Mammary epithelial cell (primary cell): ENCODE measurements at regions of chr5 and their contacts with region 1.

Region 1: DNA sequence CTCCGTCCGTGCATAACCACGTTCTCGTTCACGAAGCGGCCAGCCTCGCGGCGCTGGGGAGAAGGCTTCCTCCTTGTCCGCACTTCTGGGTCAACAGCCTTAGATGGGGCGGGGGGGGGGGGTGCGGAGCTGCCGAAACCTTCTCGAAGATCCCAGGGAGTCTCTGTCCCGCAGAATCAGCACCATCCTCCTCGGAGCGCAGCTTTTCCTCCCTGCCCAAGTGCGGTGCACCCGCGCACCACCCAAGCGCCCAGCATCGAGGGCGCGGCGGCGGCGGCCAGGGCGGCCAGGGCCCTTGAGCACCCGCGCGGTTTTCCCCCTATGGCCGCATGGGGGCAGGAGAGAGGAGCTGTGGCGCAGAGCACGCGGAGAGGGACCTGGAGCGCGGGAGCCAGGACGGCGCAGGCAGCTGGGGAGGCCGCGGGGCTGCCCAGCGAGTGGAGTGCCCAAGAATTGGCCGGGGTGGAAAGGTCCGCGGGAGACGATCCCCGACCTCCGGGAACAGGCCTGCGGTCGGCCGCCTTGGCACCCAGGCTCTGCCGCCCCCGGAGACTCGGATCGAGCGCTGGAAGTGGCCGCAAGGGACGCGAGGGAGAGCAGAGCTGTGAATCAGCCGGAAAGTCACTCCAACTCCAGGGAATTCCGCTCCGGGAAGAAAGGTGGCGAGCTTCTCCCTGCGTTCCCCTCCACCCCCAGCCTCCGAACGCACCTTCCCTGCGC is 43.1 kb downstream of the TMEM174 start:
- DNase-seq: peak; percentile 82
- H3K4me3 ChIP-seq: peak overlapping the region; percentile 52 to 63 (median 59)
- H3K27ac ChIP-seq: peak overlapping the region; percentile 28
- H3K4me1 ChIP-seq: peaks cover 11% of the 10 kb centered on the region
- H3K27me3 ChIP-seq: no peaks in the 10 kb centered on the region
- CTCF ChIP-seq: peak; percentile 52 to 80

Region 2: GRCh38 chr5:72920690-72921502 is 295.2 kb before region 1 on chr5:
- CTCF ChIA-PET with region 1: interaction called, 5 read pairs
- dilution Hi-C with region 1: no loop called
- in situ Hi-C with region 1: no loop called
- intact Hi-C with region 1: loop called (anchors 2 kb)
- DNase-seq: peak; percentile 26
- H3K4me3 ChIP-seq: no peak overlapping the region
- H3K27ac ChIP-seq: no peak overlapping the region
- H3K4me1 ChIP-seq: no peaks in the 10 kb centered on the region
- H3K27me3 ChIP-seq: no peaks in the 10 kb centered on the region
- CTCF ChIP-seq: peak; percentile 29 to 48

Region 3: GRCh38 chr5:73088026-73088425 is 128.0 kb before region 1 on chr5:
- CTCF ChIA-PET with region 1: interaction called, 8 read pairs
- dilution Hi-C with region 1: no loop called
- in situ Hi-C with region 1: no loop called
- intact Hi-C with region 1: loop called (anchors 2 kb)
- DNase-seq: no peak
- H3K4me3 ChIP-seq: no peak overlapping the region
- H3K27ac ChIP-seq: no peak overlapping the region
- H3K4me1 ChIP-seq: no peaks in the 10 kb centered on the region
- H3K27me3 ChIP-seq: no peaks in the 10 kb centered on the region
- CTCF ChIP-seq: no peak

Region 4: GRCh38 chr5:73152411-73153388 is 63.4 kb before region 1 on chr5:
- CTCF ChIA-PET with region 1: no interaction called
- dilution Hi-C with region 1: no loop called
- in situ Hi-C with region 1: no loop called
- intact Hi-C with region 1: no loop called
- DNase-seq: no peak
- H3K4me3 ChIP-seq: no peak overlapping the region
- H3K27ac ChIP-seq: no peak overlapping the region
- H3K4me1 ChIP-seq: no peaks in the 10 kb centered on the region
- H3K27me3 ChIP-seq: no peaks in the 10 kb centered on the region
- CTCF ChIP-seq: peak in 1 of 2 donors; percentile 56

Region 5: GRCh38 chr5:73298772-73299630 is 83.0 kb after region 1 on chr5:
- CTCF ChIA-PET with region 1: interaction called, 3 read pairs
- dilution Hi-C with region 1: no loop called
- in situ Hi-C with region 1: no loop called
- intact Hi-C with region 1: loop called (anchors 1 kb)
- DNase-seq: peak; percentile 22
- H3K4me3 ChIP-seq: no peak overlapping the region
- H3K27ac ChIP-seq: no peak overlapping the region
- H3K4me1 ChIP-seq: peaks cover 14% of the 10 kb centered on the region
- H3K27me3 ChIP-seq: peaks cover 38% of the 10 kb centered on the region
- CTCF ChIP-seq: no peak

Region 6: GRCh38 chr5:73365301-73365853 is 149.3 kb after region 1 on chr5:
- CTCF ChIA-PET with region 1: interaction called, 5 read pairs
- dilution Hi-C with region 1: no loop called
- in situ Hi-C with region 1: no loop called
- intact Hi-C with region 1: loop called (anchors 1 kb)
- DNase-seq: peak; percentile 91
- H3K4me3 ChIP-seq: no peak overlapping the region
- H3K27ac ChIP-seq: peak overlapping the region; percentile 80
- H3K4me1 ChIP-seq: peaks cover 46% of the 10 kb centered on the region
- H3K27me3 ChIP-seq: no peaks in the 10 kb centered on the region
- CTCF ChIP-seq: no peak

Region 7: GRCh38 chr5:73464016-73464745 is 248.1 kb after region 1 on chr5:
- CTCF ChIA-PET with region 1: no interaction called
- dilution Hi-C with region 1: no loop called
- in situ Hi-C with region 1: loop called in 1 of 2 experiments (anchors 10 kb)
- intact Hi-C with region 1: no loop called
- DNase-seq: no peak
- H3K4me3 ChIP-seq: no peak overlapping the region
- H3K27ac ChIP-seq: no peak overlapping the region
- H3K4me1 ChIP-seq: no peaks in the 10 kb centered on the region
- H3K27me3 ChIP-seq: no peaks in the 10 kb centered on the region
- CTCF ChIP-seq: no peak